Activated CD4-positive, alpha-beta T cell treated with anti-CD3 and anti-CD28 coated beads for 36 hours (primary cell): ENCODE measurements at regions of chr2 and their contacts with region 1.

Region 1: GRCh38 chr2:202671317-202672035 is 36.7 kb downstream of the FAM117B start:
- DNase-seq: no peak
- ATAC-seq: no peak
- H3K4me3 Mint-ChIP-seq: no peak overlapping the region
- H3K27ac Mint-ChIP-seq: no peak overlapping the region
- H3K4me1 Mint-ChIP-seq: peaks cover 78% of the 10 kb centered on the region
- H3K27me3 Mint-ChIP-seq: no peaks in the 10 kb centered on the region

Region 2: DNA sequence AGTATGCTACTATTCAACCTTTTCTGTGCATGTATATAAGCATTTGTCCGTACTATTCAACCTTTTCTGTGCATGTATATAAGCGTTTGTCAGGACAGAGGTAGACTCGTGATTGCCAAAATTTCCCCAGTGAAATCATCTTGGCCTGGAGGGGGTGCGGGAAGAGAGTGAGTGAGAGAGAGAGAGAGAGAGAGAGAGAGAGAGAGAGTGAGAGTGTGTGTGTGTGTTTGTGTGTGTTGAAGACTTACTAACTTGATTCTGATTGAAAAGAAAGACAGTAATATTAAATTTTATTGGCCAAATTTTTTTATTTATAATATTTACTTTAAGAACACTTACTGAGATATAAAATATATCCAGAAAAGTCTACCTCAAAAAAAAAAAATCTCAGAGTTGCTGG is 17.6 kb before region 1 on chr2:
- CTCF ChIA-PET with region 1: interaction called, 6 read pairs
- POLR2A ChIA-PET with region 1: no interaction called
- intact Hi-C with region 1: loop called in 1 of 2 experiments (anchors 2 kb)
- DNase-seq: no peak
- ATAC-seq: no peak
- H3K4me3 Mint-ChIP-seq: no peak overlapping the region
- H3K27ac Mint-ChIP-seq: peak overlapping the region; percentile 40
- H3K4me1 Mint-ChIP-seq: peaks cover 82% of the 10 kb centered on the region
- H3K27me3 Mint-ChIP-seq: no peaks in the 10 kb centered on the region

Region 3: GRCh38 chr2:202703091-202703490 is 31.6 kb after region 1 on chr2:
- CTCF ChIA-PET with region 1: interaction called, 4 read pairs
- POLR2A ChIA-PET with region 1: interaction called, 19 read pairs
- intact Hi-C with region 1: loop called (anchors 2 to 5 kb)
- DNase-seq: no peak
- ATAC-seq: peak; percentile 15
- H3K4me3 Mint-ChIP-seq: peak overlapping the region; percentile 9
- H3K27ac Mint-ChIP-seq: peak overlapping the region; percentile 91
- H3K4me1 Mint-ChIP-seq: peaks cover 68% of the 10 kb centered on the region
- H3K27me3 Mint-ChIP-seq: no peaks in the 10 kb centered on the region